Right ventricle myocardium inferior (tissue), 1 donor: ENCODE measurements at regions of chr6 and their contacts with region 1.

Region 1: GRCh38 chr6:28923318-28924102 is at the start of gene TRIM27:
- DNase-seq: peak; percentile 96
- ATAC-seq: peak; percentile 97
- total RNA-seq, gene TRIM27: 18.5 TPM

Region 2: GRCh38 chr6:28940858-28941680 is 17.6 kb after region 1 on chr6:
- intact Hi-C with region 1: loop called (anchors 2 kb)
- DNase-seq: no peak
- ATAC-seq: peak; percentile 86

Region 3: DNA sequence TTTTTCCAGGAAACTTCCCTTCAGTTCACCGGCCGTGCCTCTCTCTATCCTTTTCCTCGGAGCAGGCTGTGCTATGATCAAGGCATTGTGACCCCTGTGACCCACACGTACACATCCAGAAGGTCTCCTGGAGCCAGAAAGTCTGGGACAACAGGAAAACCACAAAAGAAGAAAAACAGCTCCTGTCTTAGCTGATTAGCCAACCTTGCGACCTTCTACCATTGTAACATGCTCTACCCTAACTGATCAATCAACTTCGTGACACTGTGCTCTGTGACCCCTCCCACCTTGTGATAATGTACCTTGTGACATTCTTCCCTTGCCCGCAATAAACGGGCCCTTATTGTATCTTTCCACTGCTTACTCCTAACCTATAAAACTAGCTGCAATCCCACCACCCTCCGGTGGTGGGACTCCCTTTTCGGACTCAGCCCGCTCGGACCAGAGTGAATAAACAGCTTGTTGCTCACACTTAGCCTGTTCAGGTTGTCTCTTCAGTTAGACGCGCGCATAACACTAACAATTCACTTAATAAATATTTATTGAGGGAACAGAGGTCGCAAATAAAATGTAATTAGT is 57.4 kb after region 1 on chr6:
- intact Hi-C with region 1: no loop called
- DNase-seq: no peak
- ATAC-seq: peak; percentile 44